ENCODE measurements at regions of chrX and their contacts with region 1.

Region 1: DNA sequence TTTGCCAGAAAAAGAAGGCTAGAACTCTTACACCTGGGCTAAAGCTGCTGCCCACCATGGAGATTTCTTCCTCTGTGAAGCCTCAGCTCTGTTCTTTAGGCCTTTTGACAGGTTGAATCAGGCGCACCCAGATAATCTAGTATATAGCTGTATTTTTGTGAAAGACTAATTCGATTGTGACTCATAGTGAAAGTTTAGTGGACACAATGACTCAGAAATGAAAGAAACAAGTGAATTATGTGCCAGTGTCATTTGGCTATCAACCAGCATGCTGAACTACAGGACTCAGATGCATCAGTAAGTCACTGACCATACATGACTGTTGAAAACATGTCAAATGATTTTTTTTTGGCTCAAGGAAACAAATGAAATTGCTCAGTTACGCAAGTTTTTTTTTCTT is 425.4 kb downstream of the SLITRK2 start:
- DNase-seq: no peak
- H3K4me3 ChIP-seq: no peak overlapping the region
- CTCF ChIP-seq: no peak
- POLR2A ChIP-seq: no peak

Region 2: DNA sequence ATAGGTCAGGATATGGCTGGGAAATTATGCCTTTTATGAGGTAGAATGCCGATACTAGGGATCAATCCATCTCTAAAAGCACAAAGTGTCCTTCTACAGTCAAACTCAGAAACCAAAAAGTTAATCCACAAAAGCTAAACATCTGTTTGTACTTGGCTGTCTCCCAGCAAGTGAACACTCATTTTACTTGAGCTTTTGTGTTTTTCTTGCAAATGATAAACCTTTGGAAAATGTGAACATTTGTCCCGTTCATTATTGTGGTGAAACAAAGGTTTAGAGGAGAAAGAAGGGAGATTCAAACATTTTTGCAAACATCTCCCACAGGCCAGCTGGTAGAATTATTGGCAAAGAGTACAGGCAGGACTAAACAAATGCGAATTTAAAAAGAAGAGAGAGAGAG is 1296.4 kb before region 1 on chrX:
- intact Hi-C with region 1: no loop called
- DNase-seq: no peak
- H3K4me3 ChIP-seq: no peak overlapping the region
- CTCF ChIP-seq: no peak
- POLR2A ChIP-seq: no peak

Region 3: DNA sequence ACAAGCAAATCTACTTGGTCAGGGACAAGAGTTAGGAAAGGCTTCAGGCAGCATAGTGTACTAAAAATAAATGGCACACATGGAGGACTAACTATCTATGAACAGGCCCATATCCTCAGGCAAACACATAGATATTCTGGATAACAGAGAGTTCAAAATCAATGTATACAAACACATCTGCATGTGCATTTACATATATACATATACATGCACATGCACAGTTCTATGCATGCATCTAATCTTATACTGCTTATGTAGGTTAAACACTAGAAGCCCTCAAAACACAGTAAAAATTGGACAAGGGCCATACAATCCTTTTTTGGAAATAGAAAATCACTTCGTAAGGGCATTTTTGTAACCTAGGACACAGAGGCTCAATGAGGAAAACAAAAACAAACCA is 108.6 kb after region 1 on chrX:
- intact Hi-C with region 1: no loop called
- DNase-seq: no peak
- H3K4me3 ChIP-seq: no peak overlapping the region
- CTCF ChIP-seq: no peak
- POLR2A ChIP-seq: no peak

Region 4: DNA sequence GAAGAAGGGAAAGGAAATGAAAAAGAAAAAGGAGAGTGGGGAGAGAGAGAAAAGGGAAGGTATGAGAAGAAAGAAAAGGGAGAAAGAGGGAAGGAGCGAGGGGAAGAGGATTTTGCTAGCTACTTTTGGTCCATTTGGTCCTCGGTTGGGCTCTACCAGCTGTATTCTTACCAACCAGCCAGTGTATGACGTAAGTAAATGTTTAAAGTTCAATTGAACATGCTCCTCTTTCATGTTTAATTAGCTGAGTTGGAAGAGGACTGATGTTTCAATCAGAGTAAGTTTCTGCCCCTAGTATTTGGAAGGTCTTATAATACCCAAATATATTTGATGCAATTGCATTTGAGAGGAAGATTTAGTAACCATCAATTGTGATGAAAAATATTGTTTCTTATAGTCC is 142.5 kb after region 1 on chrX:
- intact Hi-C with region 1: no loop called
- DNase-seq: no peak
- H3K4me3 ChIP-seq: no peak overlapping the region
- CTCF ChIP-seq: no peak
- POLR2A ChIP-seq: no peak

Region 5: GRCh38 chrX:147602176-147602696 is 1359.2 kb after region 1 on chrX:
- intact Hi-C with region 1: loop called (anchors 5 kb)
- DNase-seq: no peak
- H3K4me3 ChIP-seq: no peak overlapping the region
- CTCF ChIP-seq: no peak
- POLR2A ChIP-seq: no peak